ENCODE measurements at regions of chr1 and their contacts with region 1.

Region 1: GRCh38 chr1:205791568-205792180 is 16.4 kb upstream of the RAB29 start:
- DNase-seq: peak; percentile 26 to 75 (median 65)
- ATAC-seq: peak; percentile 86
- H3K4me3 ChIP-seq: no peak overlapping the region
- H3K4me3 Mint-ChIP-seq: no peak overlapping the region
- H3K27ac ChIP-seq: no peak overlapping the region
- H3K27ac Mint-ChIP-seq: no peak overlapping the region
- H3K4me1 ChIP-seq: no peaks in the 10 kb centered on the region
- H3K4me1 Mint-ChIP-seq: no peaks in the 10 kb centered on the region
- H3K27me3 ChIP-seq: no peaks in the 10 kb centered on the region
- H3K27me3 Mint-ChIP-seq: no peaks in the 10 kb centered on the region
- CTCF ChIP-seq: peak; percentile 72

Region 2: GRCh38 chr1:205805082-205805712 is 13.5 kb after region 1 on chr1:
- CTCF ChIA-PET with region 1: interaction called, 22 read pairs
- POLR2A ChIA-PET with region 1: interaction called, 3 read pairs
- intact Hi-C with region 1: no loop called
- DNase-seq: peak in 4 of 9 experiments; percentile 20 to 46 (median 30)
- ATAC-seq: peak; percentile 62
- H3K4me3 ChIP-seq: peak overlapping the region in 1 of 2 experiments; percentile 31
- H3K4me3 Mint-ChIP-seq: peak overlapping the region; percentile 54
- H3K27ac ChIP-seq: peak overlapping the region; percentile 1 to 6
- H3K27ac Mint-ChIP-seq: peak overlapping the region; percentile 55
- H3K4me1 ChIP-seq: peaks cover 57% of the 10 kb centered on the region
- H3K4me1 Mint-ChIP-seq: peaks cover 67% of the 10 kb centered on the region
- H3K27me3 ChIP-seq: no peaks in the 10 kb centered on the region
- H3K27me3 Mint-ChIP-seq: no peaks in the 10 kb centered on the region
- CTCF ChIP-seq: no peak

Region 3: DNA sequence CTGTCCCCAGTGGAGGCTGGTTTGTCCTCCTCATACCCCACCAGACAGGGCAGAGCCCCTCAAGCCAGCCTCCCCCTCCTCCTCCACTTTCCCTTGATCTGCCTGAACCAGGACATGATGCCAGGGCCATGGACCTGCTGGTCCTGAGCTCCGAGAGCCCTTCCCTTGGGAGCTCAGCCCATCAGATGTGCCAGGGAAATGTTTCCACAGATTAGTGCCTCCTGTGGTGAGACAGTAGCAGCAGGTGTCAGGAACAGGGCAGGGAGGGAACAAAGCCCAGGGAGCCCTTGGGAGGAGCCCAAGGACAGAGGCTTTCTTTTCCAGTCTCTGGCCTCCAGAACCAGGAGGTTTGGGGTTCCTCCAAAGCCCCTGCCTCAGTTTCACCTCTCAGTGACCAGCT is 35.9 kb after region 1 on chr1:
- CTCF ChIA-PET with region 1: interaction called, 14 read pairs
- POLR2A ChIA-PET with region 1: no interaction called
- intact Hi-C with region 1: no loop called
- DNase-seq: no peak
- ATAC-seq: no peak
- H3K4me3 ChIP-seq: no peak overlapping the region
- H3K4me3 Mint-ChIP-seq: no peak overlapping the region
- H3K27ac ChIP-seq: no peak overlapping the region
- H3K27ac Mint-ChIP-seq: no peak overlapping the region
- H3K4me1 ChIP-seq: no peaks in the 10 kb centered on the region
- H3K4me1 Mint-ChIP-seq: peaks cover 6% of the 10 kb centered on the region
- H3K27me3 ChIP-seq: no peaks in the 10 kb centered on the region
- H3K27me3 Mint-ChIP-seq: no peaks in the 10 kb centered on the region
- CTCF ChIP-seq: no peak

Region 4: GRCh38 chr1:205907794-205908193 is 116.1 kb after region 1 on chr1:
- CTCF ChIA-PET with region 1: interaction called, 11 read pairs
- POLR2A ChIA-PET with region 1: no interaction called
- intact Hi-C with region 1: loop called in 1 of 2 experiments (anchors 1 kb)
- DNase-seq: no peak
- ATAC-seq: no peak
- H3K4me3 ChIP-seq: no peak overlapping the region
- H3K4me3 Mint-ChIP-seq: no peak overlapping the region
- H3K27ac ChIP-seq: no peak overlapping the region
- H3K27ac Mint-ChIP-seq: no peak overlapping the region
- H3K4me1 ChIP-seq: no peaks in the 10 kb centered on the region
- H3K4me1 Mint-ChIP-seq: no peaks in the 10 kb centered on the region
- H3K27me3 ChIP-seq: no peaks in the 10 kb centered on the region
- H3K27me3 Mint-ChIP-seq: peaks cover 5% of the 10 kb centered on the region
- CTCF ChIP-seq: no peak

Region 5: DNA sequence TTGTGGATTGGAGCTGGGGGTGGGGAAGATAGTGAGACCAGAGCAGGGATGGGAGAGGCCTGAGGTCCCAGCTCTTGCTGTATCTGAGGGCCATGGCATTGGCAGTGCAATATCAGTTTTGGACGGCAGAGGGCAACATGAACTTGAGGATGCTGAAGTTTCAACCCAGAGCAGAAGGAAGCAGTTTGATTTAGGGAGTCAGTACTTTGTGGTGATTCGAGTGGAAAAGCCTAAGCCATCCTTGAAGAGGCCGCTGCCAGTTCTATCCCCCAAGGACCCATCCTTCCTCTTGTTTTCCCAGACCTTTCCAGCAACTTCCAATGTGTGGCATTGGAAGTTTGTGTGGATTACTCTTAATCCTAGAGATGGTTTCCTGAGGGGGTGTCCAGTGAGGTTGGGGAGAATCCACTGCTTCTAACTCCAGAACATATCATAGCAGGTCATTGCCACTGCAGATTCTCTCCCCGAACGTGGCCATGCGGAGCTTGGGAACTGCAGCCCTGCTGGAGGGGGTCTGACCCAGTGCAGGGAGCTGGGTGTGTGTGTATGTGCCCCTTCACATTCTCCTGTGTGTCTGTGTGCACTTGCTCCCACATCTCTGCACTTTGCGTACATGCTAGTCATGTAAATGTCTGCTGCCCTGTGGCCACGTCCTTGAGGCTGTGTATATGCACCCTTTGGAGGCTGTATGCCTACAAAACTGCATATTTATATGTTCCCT is 127.5 kb after region 1 on chr1:
- CTCF ChIA-PET with region 1: interaction called, 32 read pairs
- POLR2A ChIA-PET with region 1: no interaction called
- intact Hi-C with region 1: loop called (anchors 1 to 2 kb)
- DNase-seq: peak; percentile 42 to 75 (median 64)
- ATAC-seq: peak; percentile 63
- H3K4me3 ChIP-seq: no peak overlapping the region
- H3K4me3 Mint-ChIP-seq: no peak overlapping the region
- H3K27ac ChIP-seq: no peak overlapping the region
- H3K27ac Mint-ChIP-seq: no peak overlapping the region
- H3K4me1 ChIP-seq: no peaks in the 10 kb centered on the region
- H3K4me1 Mint-ChIP-seq: no peaks in the 10 kb centered on the region
- H3K27me3 ChIP-seq: no peaks in the 10 kb centered on the region
- H3K27me3 Mint-ChIP-seq: peaks cover 10% of the 10 kb centered on the region
- CTCF ChIP-seq: peak; percentile 75

Region 6: DNA sequence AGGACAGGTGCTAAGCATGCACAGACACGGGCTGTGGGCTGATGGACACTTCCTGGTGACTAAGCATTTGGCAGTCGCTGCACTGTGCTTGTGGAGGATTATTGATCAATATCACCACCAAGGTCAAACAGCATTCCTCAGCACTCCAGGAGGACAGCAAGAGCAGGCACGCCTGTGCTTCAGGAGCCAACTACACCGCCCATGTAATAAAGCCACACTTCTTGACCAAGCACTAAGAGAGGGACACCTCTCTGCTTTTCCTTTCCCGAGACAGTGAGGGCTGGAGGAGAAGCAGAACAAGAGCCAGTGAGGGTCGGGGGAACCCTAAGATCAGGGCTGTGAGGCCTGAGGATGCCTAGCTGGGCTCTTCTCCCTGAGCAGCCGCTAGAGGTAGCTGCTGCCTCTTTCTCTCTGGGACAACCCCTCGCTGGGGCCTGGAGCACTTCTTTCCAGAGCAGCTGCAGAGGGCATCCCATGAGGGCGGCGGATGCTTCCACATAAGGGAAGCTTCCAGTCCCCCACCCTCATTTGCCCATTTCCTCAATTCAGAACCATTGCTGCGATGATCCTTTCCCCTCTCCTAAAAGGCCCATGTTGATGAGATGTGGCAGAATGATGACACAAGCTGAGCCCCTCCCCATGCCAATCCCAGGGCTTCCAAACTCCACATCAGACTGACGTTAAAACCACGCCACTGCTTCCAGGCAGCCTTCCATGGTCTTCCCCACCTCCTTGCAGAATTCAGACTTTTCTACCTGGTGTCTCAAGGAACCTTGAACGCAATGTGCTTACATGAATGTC is 192.5 kb after region 1 on chr1:
- CTCF ChIA-PET with region 1: interaction called, 272 read pairs
- POLR2A ChIA-PET with region 1: no interaction called
- intact Hi-C with region 1: no loop called
- DNase-seq: peak in 1 of 9 experiments; percentile 19
- ATAC-seq: no peak
- H3K4me3 ChIP-seq: no peak overlapping the region
- H3K4me3 Mint-ChIP-seq: no peak overlapping the region
- H3K27ac ChIP-seq: no peak overlapping the region
- H3K27ac Mint-ChIP-seq: no peak overlapping the region
- H3K4me1 ChIP-seq: no peaks in the 10 kb centered on the region
- H3K4me1 Mint-ChIP-seq: no peaks in the 10 kb centered on the region
- H3K27me3 ChIP-seq: no peaks in the 10 kb centered on the region
- H3K27me3 Mint-ChIP-seq: no peaks in the 10 kb centered on the region
- CTCF ChIP-seq: no peak

Region 7: DNA sequence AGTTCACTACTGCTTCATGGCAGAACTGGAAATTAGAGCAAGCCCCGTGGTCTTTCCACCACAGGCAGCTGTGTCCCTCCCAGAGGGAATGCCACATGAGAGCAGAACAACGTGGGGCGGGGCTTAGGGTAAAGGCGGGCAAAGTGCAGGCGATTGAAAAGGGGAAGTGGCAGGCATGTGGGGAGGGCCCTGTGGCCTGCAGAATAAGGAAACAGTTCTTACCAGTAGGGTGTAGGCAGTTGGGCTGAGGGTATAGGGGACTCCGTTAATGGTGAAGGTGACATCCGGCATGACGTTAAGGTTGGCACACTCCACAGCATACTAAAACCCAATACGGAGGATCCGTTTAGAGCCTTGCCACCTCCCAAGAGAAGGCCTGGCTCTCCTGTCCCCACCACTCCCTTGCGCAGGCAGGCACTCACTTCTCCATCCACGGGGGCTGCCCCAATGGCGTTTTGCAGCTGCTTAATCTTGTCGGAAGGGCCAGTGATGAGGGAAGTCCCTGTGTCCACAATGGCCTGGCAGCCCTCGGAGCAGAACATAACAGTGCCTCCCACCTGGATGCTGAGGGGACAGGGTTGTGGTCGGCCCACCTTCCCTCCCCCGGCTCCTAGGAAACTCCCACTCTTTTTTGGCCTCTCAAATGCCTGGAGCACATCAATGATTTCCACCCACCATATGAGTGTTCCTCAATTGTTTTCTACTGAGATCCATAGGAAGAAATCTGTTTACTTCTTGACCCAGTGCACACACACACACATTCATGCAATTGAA is 220.6 kb after region 1 on chr1:
- CTCF ChIA-PET with region 1: no interaction called
- POLR2A ChIA-PET with region 1: no interaction called
- intact Hi-C with region 1: no loop called
- DNase-seq: peak; percentile 8 to 66 (median 37)
- ATAC-seq: peak; percentile 94
- H3K4me3 ChIP-seq: no peak overlapping the region
- H3K4me3 Mint-ChIP-seq: peak overlapping the region; percentile 44
- H3K27ac ChIP-seq: no peak overlapping the region
- H3K27ac Mint-ChIP-seq: no peak overlapping the region
- H3K4me1 ChIP-seq: peaks cover 15% of the 10 kb centered on the region
- H3K4me1 Mint-ChIP-seq: peaks cover 21% of the 10 kb centered on the region
- H3K27me3 ChIP-seq: no peaks in the 10 kb centered on the region
- H3K27me3 Mint-ChIP-seq: no peaks in the 10 kb centered on the region
- CTCF ChIP-seq: no peak

Region 8: DNA sequence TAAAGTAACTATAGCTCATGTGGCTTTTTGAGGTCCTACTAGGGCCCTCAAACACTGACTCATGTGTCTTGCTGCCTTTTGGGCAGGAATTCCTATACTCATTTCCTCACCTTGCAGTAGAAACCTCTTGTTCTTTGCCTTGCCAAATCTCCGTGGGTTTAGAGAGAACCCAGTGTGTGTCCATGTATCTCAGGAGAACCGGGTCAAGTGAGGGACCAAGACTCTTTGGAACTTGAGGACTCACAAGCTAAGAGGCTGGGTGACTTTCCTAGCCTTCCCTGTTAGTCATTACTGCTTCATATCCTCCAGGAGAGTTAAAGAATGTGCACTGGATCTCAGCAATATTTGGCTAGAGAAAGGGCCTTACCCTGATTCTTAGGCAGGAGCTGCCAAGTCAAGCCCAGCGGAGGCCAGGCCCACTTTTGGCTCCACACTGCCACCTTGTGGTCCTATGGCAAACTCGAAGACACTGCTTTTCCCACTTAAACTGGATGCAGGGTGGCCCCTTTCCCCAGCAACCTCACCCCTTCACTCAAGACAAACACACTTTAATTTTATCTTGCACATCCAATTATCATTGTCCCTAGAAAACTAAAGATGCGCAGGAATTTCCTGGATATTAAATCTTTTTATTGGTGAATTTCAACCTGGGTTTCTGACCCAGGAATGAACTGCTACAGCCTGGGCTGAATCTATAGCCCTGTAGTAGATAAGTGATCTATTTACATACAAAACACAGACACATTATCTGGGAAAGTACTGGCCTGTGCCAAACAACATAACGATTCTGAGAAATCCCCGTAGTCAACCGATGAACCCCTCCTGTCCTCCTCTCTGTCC is 314.9 kb after region 1 on chr1:
- CTCF ChIA-PET with region 1: interaction called, 10 read pairs
- POLR2A ChIA-PET with region 1: no interaction called
- intact Hi-C with region 1: loop called in 1 of 2 experiments (anchors 1 kb)
- DNase-seq: peak; percentile 56 to 85 (median 73)
- ATAC-seq: peak; percentile 79
- H3K4me3 ChIP-seq: no peak overlapping the region
- H3K4me3 Mint-ChIP-seq: no peak overlapping the region
- H3K27ac ChIP-seq: no peak overlapping the region
- H3K27ac Mint-ChIP-seq: no peak overlapping the region
- H3K4me1 ChIP-seq: no peaks in the 10 kb centered on the region
- H3K4me1 Mint-ChIP-seq: no peaks in the 10 kb centered on the region
- H3K27me3 ChIP-seq: no peaks in the 10 kb centered on the region
- H3K27me3 Mint-ChIP-seq: peaks cover under 1% of the 10 kb centered on the region
- CTCF ChIP-seq: peak; percentile 71